ENCODE measurements at regions of chr5 and their contacts with region 1.

Region 1: DNA sequence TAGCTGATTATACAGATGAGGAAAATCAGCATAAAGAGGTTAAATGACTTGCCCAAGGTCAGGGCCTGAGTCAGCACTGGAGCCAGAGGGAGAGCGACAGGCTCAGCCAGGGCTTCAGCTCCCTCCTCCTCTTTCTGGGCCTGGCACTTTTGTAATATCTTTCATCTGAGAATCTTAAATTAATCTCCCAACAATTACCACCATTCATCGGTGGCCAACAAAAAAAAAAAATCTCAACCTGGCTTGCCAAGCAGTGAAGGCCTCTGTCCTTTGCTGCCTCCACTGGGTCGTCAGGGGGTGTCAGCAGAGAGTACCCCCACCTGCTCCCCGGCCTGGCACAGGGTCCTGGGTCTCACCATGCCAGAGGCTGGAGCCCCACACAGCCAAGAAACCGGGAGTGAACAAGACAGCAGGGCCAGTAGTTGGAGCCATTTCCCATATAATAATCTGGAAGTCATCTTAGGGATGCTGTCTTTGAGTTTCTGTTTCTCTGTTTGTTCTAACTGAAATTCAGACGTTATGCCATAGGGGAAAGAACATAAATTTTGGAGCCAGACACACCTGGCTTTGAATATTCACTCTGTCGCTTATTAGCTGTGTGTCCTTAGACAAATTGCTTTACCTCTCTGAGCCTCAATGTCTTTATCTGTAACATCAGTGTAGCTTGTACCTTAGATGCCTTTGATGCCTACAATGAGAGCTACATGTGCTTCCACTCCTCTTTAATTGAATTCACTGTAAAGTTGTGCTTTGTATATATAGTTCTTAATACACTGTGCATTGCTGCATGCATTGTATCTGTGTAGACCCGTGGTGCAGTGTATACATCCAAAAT is 299.9 kb upstream of the MSX2 start:
- DNase-seq: no peak
- ATAC-seq: peak in 1 of 2 donors; percentile 54
- H3K4me3 ChIP-seq: no peak overlapping the region
- H3K27ac ChIP-seq: peak overlapping the region in 1 of 4 donors; percentile 63
- H3K4me1 ChIP-seq: peaks cover 5 to 18% of the 10 kb centered on the region in 2 donors
- H3K27me3 ChIP-seq: no peaks in the 10 kb centered on the region
- CTCF ChIP-seq: no peak
- POLR2A ChIP-seq: no peak

Region 2: DNA sequence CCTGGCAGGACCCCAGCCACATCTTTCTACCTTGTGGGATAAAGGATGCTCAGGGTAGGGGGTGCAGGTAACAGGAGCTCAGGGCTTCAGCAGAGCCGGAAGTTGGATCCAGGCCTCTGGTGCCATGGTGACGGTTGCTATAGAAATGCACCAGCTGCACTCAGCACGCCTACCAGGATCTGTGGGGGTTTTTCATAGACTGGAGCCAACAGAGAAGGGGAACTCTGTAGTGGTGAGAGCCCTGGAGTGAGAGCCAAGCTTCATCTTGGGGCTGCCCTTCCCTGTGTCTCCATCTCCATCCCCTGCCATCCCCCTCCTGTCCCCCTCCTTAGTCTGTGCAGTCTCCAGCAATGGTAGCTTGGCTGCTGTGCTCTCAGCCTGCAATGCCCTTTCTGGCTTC is 780.5 kb before region 1 on chr5:
- in situ Hi-C with region 1: no loop called
- intact Hi-C with region 1: no loop called
- DNase-seq: no peak
- ATAC-seq: no peak
- H3K4me3 ChIP-seq: no peak overlapping the region
- H3K27ac ChIP-seq: no peak overlapping the region
- H3K4me1 ChIP-seq: peaks cover 3 to 9% of the 10 kb centered on the region in 2 donors
- H3K27me3 ChIP-seq: no peaks in the 10 kb centered on the region
- CTCF ChIP-seq: no peak
- POLR2A ChIP-seq: no peak

Region 3: DNA sequence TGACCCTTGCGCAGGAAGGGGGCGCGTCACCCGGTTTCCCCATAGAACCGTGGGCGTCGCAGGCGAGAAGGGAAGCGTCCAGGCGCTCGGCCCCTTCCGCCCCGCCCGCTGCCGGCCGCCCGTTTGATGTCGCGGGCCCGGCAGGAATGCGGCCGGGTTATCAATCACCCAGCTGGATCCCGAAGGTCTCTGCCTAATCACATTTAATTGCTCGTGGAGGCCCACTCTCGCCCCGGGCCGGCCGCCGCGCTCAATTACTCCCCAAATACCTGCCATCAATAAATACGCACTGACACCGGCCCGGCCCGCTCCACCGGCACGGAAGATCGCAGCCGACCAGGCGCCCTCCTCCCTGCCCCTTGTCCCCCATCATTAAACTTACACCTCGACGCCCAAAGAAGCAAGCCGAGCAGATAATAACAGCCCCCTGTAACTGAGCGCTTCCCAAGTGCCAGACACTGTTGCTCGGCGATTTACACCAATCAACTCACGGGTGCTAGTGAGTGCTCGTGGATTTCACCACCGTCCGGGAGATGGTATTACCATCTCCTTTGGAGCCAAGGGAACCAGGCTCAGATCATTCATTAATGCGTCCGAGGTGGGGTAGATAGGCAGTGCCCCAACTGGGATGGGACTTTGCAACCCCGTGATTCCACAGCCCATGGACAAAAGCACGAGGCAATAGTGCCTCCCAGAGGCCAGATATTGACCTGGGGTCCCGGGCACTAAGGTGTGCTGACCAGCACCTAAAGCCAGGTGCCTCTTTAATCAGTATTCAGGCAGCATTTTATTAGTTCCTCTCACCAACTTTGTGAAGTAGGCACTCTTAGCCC is 311.3 kb after region 1 on chr5:
- in situ Hi-C with region 1: loop called in 2 of 4 experiments (anchors 10 kb)
- intact Hi-C with region 1: loop called (anchors 1 kb)
- DNase-seq: no peak
- ATAC-seq: peak in 1 of 2 donors; percentile 56
- H3K4me3 ChIP-seq: peak overlapping the region in 1 of 4 donors; percentile 5
- H3K27ac ChIP-seq: no peak overlapping the region
- H3K4me1 ChIP-seq: peaks cover 0 to 3% of the 10 kb centered on the region in 2 donors
- H3K27me3 ChIP-seq: peaks cover 47 to 60% (median 60%) of the 10 kb centered on the region in 3 donors
- CTCF ChIP-seq: peak in 3 of 5 experiments; percentile 32 to 49 (median 36)
- POLR2A ChIP-seq: no peak

Region 4: DNA sequence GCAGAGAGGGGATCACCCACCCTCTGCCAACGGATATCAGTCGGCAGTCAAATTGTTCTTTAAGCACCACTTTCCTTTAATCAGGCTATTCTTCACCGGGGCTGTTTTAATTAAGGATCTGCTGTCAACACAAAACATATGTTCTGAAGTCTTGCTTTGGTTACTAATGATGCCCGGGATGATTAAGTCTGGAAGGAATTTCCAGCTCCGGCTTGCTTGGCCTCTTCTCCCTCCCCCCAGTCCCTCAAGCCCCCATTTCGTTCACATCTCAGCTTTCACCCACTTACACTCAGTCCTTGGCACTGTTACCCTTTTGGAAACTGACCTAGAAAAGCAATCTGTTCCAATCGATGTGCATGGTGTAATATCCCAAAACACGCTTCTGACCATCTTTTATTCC is 374.7 kb after region 1 on chr5:
- in situ Hi-C with region 1: loop called in 3 of 4 experiments (anchors 5 to 10 kb)
- intact Hi-C with region 1: no loop called
- DNase-seq: no peak
- ATAC-seq: no peak
- H3K4me3 ChIP-seq: no peak overlapping the region
- H3K27ac ChIP-seq: no peak overlapping the region
- H3K4me1 ChIP-seq: no peaks in the 10 kb centered on the region
- H3K27me3 ChIP-seq: peaks cover 8 to 23% (median 15%) of the 10 kb centered on the region in 3 donors
- CTCF ChIP-seq: no peak
- POLR2A ChIP-seq: no peak

Measured in gastrocnemius medialis (tissue), 4 donors.